Posterior vena cava (tissue), 2 donors: ENCODE measurements at regions of chr19 and their contacts with region 1.

Region 1: DNA sequence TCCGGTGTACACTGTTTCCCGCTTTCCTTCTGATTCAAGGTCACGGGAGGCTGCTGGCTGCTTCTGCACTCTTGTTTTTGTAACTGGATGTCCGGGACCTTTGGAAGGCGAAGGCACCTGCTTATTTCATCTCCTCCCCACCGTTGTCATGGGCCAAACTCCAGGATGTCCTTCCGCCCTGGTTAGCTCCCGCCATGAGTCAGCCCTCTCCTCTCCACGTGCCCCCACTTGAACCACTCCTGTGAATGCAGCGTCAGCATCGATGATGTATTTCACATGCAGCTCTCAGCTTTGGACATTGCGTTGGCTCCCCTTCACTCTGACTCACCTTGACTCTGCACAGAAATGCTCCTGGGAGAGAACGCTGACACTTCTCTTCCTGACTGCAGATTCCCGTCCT is 5.5 kb upstream of the GALP start:
- DNase-seq: no peak

Region 2: DNA sequence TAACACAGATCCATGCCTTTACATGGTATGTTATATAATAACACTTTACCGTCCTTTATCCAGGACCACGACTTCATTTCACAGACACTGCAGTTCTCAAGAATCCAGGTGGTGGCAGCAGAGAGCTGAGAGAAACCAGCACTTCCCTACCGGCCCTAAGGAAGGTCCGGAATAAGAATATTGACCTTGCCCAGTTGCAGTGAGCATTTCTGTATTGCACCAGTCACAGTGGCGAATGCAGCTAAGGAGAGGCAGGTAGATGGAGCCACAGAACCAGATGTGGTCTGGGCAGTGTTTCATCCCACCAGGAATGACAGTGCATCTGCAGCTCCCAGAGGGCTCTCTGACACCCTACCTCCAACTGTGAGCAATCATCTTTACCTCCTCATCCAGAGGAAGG is 93.8 kb before region 1 on chr19:
- intact Hi-C with region 1: loop called (anchors 2 to 5 kb)
- DNase-seq: no peak

Region 3: DNA sequence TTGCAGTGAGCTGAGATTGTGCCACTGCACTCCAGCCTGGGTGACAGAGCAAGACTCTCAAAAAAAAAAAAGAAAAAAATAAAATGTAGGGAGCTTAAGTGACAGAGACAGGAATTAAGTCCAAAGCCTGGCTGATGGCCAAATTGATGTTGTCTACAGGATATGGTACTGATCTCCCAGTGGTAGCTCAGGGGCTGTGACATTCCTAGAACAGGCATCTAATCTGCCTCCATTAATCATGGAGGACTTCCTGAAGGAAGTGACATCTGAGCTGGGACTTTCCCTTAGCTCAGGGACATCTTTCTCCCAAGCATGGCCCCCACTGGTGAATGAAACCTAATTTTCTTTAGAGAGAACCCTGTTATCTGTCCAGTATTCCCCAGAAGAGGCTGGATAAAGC is 90.9 kb after region 1 on chr19:
- intact Hi-C with region 1: no loop called
- DNase-seq: no peak